ENCODE measurements at regions of chr6 and their contacts with region 1.

Region 1: DNA sequence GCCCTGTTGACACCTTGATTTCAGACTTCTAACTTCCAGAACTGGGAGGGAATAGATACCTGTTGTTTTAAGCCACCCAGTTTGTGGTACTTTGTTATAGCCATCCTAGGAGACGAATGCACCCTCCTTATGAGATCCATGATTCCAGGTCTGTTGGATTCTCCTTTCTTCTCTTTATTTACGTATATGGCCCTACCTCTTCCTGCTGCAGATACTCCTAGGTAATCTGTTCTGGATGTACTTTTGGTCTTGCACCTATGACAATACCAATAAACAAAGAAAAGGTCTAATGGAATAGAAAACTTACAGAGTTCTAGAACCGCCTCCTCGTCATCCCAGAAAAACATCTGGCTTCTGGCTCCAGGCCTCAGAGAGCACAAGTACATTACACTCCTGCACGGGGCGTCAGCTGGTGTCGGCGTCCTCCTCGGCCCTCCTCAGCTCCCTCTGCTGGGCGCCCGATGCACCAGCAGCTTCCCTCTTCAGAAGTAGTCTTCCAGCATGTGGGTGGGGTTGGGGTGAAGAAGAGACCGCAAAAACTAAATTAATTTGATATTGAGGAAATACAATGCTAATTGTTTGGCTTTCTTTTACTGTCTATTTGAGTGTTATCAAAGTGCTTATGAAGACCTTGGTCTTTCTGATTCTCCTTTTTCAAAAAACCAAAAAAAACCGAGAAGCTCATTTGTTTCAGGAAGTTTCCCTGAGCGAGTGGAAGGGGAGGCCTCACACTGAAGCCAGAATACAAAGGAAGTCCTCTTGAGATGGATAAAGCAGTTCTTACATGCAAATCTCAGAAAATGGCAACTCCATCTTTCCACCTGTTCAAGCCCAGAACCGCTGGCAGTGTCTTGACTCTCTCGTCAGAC is 9.7 kb upstream of the ATXN1 start:
- DNase-seq: peak; percentile 75 to 79 (median 77)
- H3K4me3 ChIP-seq: no peak overlapping the region
- H3K4me3 Mint-ChIP-seq: peak overlapping the region in 6 of 8 donors; percentile 30 to 71 (median 46)
- H3K27ac ChIP-seq: no peak overlapping the region
- H3K27ac Mint-ChIP-seq: peak overlapping the region; percentile 80 to 95 (median 91)
- H3K4me1 ChIP-seq: peaks cover 36% of the 10 kb centered on the region
- H3K4me1 Mint-ChIP-seq: peaks cover 30 to 56% (median 41%) of the 10 kb centered on the region in 4 donors
- H3K27me3 ChIP-seq: no peaks in the 10 kb centered on the region
- H3K27me3 Mint-ChIP-seq: no peaks in the 10 kb centered on the region

Region 2: GRCh38 chr6:15569035-15569995 is 1201.6 kb before region 1 on chr6:
- CTCF ChIA-PET with region 1: no interaction called
- POLR2A ChIA-PET with region 1: no interaction called
- intact Hi-C with region 1: no loop called
- DNase-seq: no peak
- H3K4me3 ChIP-seq: no peak overlapping the region
- H3K4me3 Mint-ChIP-seq: no peak overlapping the region
- H3K27ac ChIP-seq: no peak overlapping the region
- H3K27ac Mint-ChIP-seq: peak overlapping the region in 1 of 7 donors; percentile 8
- H3K4me1 ChIP-seq: no peaks in the 10 kb centered on the region
- H3K4me1 Mint-ChIP-seq: peaks cover 4 to 13% (median 8%) of the 10 kb centered on the region in 4 donors
- H3K27me3 ChIP-seq: no peaks in the 10 kb centered on the region
- H3K27me3 Mint-ChIP-seq: no peaks in the 10 kb centered on the region

Region 3: GRCh38 chr6:15893556-15894268 is 877.2 kb before region 1 on chr6:
- CTCF ChIA-PET with region 1: no interaction called
- POLR2A ChIA-PET with region 1: no interaction called
- intact Hi-C with region 1: no loop called
- DNase-seq: no peak
- H3K4me3 ChIP-seq: no peak overlapping the region
- H3K4me3 Mint-ChIP-seq: no peak overlapping the region
- H3K27ac ChIP-seq: no peak overlapping the region
- H3K27ac Mint-ChIP-seq: no peak overlapping the region
- H3K4me1 ChIP-seq: no peaks in the 10 kb centered on the region
- H3K4me1 Mint-ChIP-seq: no peaks in the 10 kb centered on the region
- H3K27me3 ChIP-seq: no peaks in the 10 kb centered on the region
- H3K27me3 Mint-ChIP-seq: peaks cover 4% of the 10 kb centered on the region in 2 donors

Region 4: GRCh38 chr6:16319813-16320532 is 451.0 kb before region 1 on chr6:
- CTCF ChIA-PET with region 1: interaction called, 10 read pairs
- POLR2A ChIA-PET with region 1: interaction called, 6 read pairs
- intact Hi-C with region 1: no loop called
- DNase-seq: peak; percentile 80 to 94 (median 86)
- H3K4me3 ChIP-seq: peak overlapping the region; percentile 19 to 41
- H3K4me3 Mint-ChIP-seq: peak overlapping the region; percentile 76 to 89 (median 83)
- H3K27ac ChIP-seq: peak overlapping the region; percentile 82
- H3K27ac Mint-ChIP-seq: peak overlapping the region; percentile 93 to 98 (median 97)
- H3K4me1 ChIP-seq: peaks cover 84% of the 10 kb centered on the region
- H3K4me1 Mint-ChIP-seq: peaks cover 47 to 84% (median 71%) of the 10 kb centered on the region in 4 donors
- H3K27me3 ChIP-seq: no peaks in the 10 kb centered on the region
- H3K27me3 Mint-ChIP-seq: no peaks in the 10 kb centered on the region

Region 5: GRCh38 chr6:16741112-16742016 is 29.6 kb before region 1 on chr6:
- CTCF ChIA-PET with region 1: interaction called, 25 read pairs
- POLR2A ChIA-PET with region 1: interaction called, 5 read pairs
- intact Hi-C with region 1: loop called (anchors 5 kb)
- DNase-seq: no peak
- H3K4me3 ChIP-seq: no peak overlapping the region
- H3K4me3 Mint-ChIP-seq: peak overlapping the region in 2 of 8 donors; percentile 20 to 23
- H3K27ac ChIP-seq: no peak overlapping the region
- H3K27ac Mint-ChIP-seq: peak overlapping the region; percentile 19 to 90 (median 52)
- H3K4me1 ChIP-seq: peaks cover 72% of the 10 kb centered on the region
- H3K4me1 Mint-ChIP-seq: peaks cover 57 to 97% (median 78%) of the 10 kb centered on the region in 4 donors
- H3K27me3 ChIP-seq: no peaks in the 10 kb centered on the region
- H3K27me3 Mint-ChIP-seq: no peaks in the 10 kb centered on the region

Region 6: DNA sequence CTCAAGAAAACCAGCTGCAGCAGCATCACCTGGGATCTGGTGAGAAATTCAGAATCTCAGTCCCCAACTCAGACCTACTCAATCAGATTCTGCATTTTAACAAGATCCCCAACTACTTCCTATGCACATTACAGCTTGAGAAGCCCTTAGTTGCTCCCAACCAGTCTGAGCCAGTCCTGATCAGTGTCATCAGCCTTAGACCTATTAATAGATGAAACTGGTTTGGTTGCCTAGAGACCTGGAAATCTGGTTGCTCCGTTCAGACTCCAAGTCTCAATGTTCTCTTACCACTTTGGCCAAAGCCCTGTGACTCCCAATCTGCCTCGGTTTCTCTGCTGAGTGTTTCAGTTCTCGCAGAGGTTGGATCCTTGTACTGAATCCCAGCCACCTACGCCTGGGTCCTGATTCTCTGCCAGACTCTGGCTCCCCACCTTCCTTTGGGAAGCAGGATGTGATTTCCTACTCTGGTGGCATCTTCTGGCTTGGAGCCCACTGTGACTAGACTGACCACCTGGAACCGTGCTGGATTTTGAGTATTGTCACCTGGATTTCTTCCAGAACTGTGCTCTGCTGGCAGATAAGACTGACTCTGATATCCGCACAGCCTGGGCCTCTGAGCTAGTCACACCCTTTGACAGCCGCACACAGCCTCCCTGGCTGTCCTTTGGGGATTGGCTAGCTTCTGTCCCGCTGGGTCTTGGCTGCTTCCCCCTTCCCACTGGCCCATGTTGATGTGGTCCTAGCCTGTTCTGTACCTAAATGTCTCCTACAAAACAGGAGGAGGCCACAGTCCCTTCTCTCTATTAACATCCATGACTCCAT is 10.6 kb after region 1 on chr6:
- CTCF ChIA-PET with region 1: interaction called, 14 read pairs
- POLR2A ChIA-PET with region 1: no interaction called
- intact Hi-C with region 1: no loop called
- DNase-seq: no peak
- H3K4me3 ChIP-seq: no peak overlapping the region
- H3K4me3 Mint-ChIP-seq: no peak overlapping the region
- H3K27ac ChIP-seq: no peak overlapping the region
- H3K27ac Mint-ChIP-seq: no peak overlapping the region
- H3K4me1 ChIP-seq: no peaks in the 10 kb centered on the region
- H3K4me1 Mint-ChIP-seq: no peaks in the 10 kb centered on the region
- H3K27me3 ChIP-seq: no peaks in the 10 kb centered on the region
- H3K27me3 Mint-ChIP-seq: peaks cover 0 to 5% of the 10 kb centered on the region in 2 donors

Region 7: DNA sequence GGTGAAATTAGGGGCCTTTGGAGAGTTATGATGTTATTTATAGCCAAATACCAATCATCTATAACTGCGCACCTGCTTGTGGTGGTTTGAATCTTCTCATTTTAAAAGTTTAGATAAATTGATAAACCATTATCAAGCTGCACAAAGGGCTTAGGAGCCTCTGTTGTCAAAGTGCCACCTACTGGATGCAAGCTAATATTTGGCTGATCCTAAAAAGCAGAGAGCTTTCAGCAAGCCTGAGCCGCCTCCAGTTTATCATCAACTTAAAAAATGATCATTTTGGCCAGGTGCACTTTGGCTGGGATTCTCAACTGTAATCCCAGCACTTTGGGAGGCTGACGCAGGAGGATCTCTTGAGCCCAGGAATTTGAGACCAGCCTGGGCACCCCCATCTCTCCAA is 48.8 kb after region 1 on chr6:
- CTCF ChIA-PET with region 1: no interaction called
- POLR2A ChIA-PET with region 1: no interaction called
- intact Hi-C with region 1: loop called (anchors 2 kb)
- DNase-seq: no peak
- H3K4me3 ChIP-seq: no peak overlapping the region
- H3K4me3 Mint-ChIP-seq: no peak overlapping the region
- H3K27ac ChIP-seq: no peak overlapping the region
- H3K27ac Mint-ChIP-seq: no peak overlapping the region
- H3K4me1 ChIP-seq: no peaks in the 10 kb centered on the region
- H3K4me1 Mint-ChIP-seq: no peaks in the 10 kb centered on the region
- H3K27me3 ChIP-seq: no peaks in the 10 kb centered on the region
- H3K27me3 Mint-ChIP-seq: peaks cover 6 to 11% of the 10 kb centered on the region in 2 donors

Region 8: GRCh38 chr6:17149571-17149970 is 378.6 kb after region 1 on chr6:
- CTCF ChIA-PET with region 1: no interaction called
- POLR2A ChIA-PET with region 1: no interaction called
- intact Hi-C with region 1: no loop called
- DNase-seq: no peak
- H3K4me3 ChIP-seq: no peak overlapping the region
- H3K4me3 Mint-ChIP-seq: no peak overlapping the region
- H3K27ac ChIP-seq: no peak overlapping the region
- H3K27ac Mint-ChIP-seq: no peak overlapping the region
- H3K4me1 ChIP-seq: no peaks in the 10 kb centered on the region
- H3K4me1 Mint-ChIP-seq: no peaks in the 10 kb centered on the region
- H3K27me3 ChIP-seq: no peaks in the 10 kb centered on the region
- H3K27me3 Mint-ChIP-seq: peaks cover 9 to 10% of the 10 kb centered on the region in 2 donors